IMR-90 (cell line): ENCODE measurements at regions of chr11 and their contacts with region 1.

Region 1: GRCh38 chr11:10307442-10308207 is 2.8 kb downstream of the ADM start:
- DNase-seq: peak; percentile 94
- ATAC-seq: peak; percentile 8
- H3K4me3 ChIP-seq: peak overlapping the region; percentile 65
- H3K27ac ChIP-seq: peak overlapping the region; percentile 83
- H3K4me1 ChIP-seq: peaks cover 7% of the 10 kb centered on the region
- H3K27me3 ChIP-seq: no peaks in the 10 kb centered on the region
- CTCF ChIP-seq: peak; percentile 95
- POLR2A ChIP-seq: peak; percentile 51; the same call in 1 of the 2 replicates
- RAD21 ChIP-seq: peak; percentile 87

Region 2: DNA sequence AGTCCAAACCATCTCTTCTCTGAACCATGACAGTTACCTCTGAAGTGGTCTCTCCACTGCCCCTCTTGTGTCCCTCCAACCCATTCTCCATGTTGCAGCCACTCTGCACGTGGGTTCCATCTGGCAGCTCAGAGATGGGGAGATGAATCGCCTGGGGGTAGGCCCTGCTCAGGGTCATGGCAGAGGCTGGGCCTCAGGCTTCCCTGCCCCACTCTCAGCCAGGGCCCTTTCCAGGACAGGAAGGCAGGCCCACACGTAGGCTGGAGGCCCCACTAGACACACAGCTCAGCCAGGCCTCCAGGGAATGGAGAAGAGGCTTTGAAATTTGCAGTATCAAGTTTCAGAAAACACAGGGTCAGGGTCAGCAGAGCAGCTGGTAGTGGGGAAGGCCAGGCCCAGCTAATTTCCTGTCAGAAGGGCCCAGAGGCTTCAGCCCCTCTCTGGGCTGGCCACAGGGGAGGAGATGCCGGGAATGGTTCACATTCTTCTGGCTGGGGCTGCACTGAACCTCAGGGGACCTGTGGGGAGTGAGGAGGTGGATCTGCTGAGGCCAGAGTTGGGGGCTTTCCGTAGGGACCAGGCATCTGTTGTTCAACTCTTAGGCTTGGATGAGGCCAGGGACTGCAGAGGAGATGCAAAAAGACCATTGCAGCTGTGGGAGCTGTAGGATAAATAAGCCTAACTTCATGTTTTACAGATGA is 542.2 kb before region 1 on chr11:
- CTCF ChIA-PET with region 1: no interaction called
- POLR2A ChIA-PET with region 1: interaction called, 18 read pairs
- dilution Hi-C with region 1: no loop called
- in situ Hi-C with region 1: no loop called
- intact Hi-C with region 1: no loop called
- DNase-seq: peak; percentile 95
- ATAC-seq: peak; percentile 90
- H3K4me3 ChIP-seq: no peak overlapping the region
- H3K27ac ChIP-seq: peak overlapping the region; percentile 98
- H3K4me1 ChIP-seq: peaks cover 35% of the 10 kb centered on the region
- H3K27me3 ChIP-seq: no peaks in the 10 kb centered on the region
- CTCF ChIP-seq: no peak
- POLR2A ChIP-seq: no peak
- RAD21 ChIP-seq: no peak

Region 3: GRCh38 chr11:9895006-9895405 is 412.6 kb before region 1 on chr11:
- CTCF ChIA-PET with region 1: no interaction called
- POLR2A ChIA-PET with region 1: interaction called, 13 read pairs
- dilution Hi-C with region 1: no loop called
- in situ Hi-C with region 1: no loop called
- intact Hi-C with region 1: no loop called
- DNase-seq: peak; percentile 51
- ATAC-seq: peak; percentile 52; the same call in 1 of the 2 replicates
- H3K4me3 ChIP-seq: no peak overlapping the region
- H3K27ac ChIP-seq: no peak overlapping the region
- H3K4me1 ChIP-seq: peaks cover 4% of the 10 kb centered on the region
- H3K27me3 ChIP-seq: no peaks in the 10 kb centered on the region
- CTCF ChIP-seq: no peak
- POLR2A ChIP-seq: no peak
- RAD21 ChIP-seq: no peak

Region 4: DNA sequence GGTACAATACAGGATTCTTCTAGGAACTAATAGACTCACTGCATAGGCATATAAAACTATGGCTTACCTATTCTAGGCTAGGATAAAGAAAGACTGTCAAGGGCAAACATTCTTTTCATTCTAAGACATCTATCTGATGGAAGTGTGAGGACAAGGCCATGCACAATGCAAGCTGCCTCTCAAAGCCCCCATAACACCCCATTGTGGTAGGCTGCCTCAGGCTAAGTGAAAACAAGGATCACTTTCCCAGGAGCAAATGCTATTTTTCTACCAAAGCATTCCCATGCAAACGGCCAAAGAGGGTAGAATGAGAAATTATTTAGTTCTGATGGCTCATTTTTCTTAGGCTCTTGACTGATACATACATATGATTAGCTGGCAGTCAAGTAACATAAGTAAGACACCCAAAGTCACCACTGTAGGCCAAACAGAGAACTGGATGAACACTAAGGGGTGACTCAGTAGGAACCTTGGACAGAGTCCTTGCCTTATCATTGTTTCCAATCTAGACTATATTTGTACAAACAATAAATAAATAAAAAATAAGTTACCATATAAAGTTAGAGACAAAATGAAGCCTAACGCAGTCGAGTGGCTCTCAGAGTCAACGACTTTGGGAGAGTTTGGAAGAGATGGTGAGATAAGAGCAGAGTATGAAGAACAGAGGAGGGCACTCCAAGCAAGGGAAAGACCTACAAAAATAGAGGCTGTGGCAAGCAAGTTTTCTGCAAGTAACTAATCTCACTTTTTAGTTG is 317.2 kb before region 1 on chr11:
- CTCF ChIA-PET with region 1: no interaction called
- POLR2A ChIA-PET with region 1: interaction called, 5 read pairs
- dilution Hi-C with region 1: no loop called
- in situ Hi-C with region 1: no loop called
- intact Hi-C with region 1: loop called (anchors 2 kb)
- DNase-seq: peak; percentile 37
- ATAC-seq: peak; percentile 53
- H3K4me3 ChIP-seq: no peak overlapping the region
- H3K27ac ChIP-seq: no peak overlapping the region
- H3K4me1 ChIP-seq: peaks cover 2% of the 10 kb centered on the region
- H3K27me3 ChIP-seq: no peaks in the 10 kb centered on the region
- CTCF ChIP-seq: peak; percentile 41
- POLR2A ChIP-seq: no peak
- RAD21 ChIP-seq: peak; percentile 53

Region 5: GRCh38 chr11:10366568-10367370 is 59.1 kb after region 1 on chr11:
- CTCF ChIA-PET with region 1: interaction called, 12 read pairs
- POLR2A ChIA-PET with region 1: interaction called, 28 read pairs
- dilution Hi-C with region 1: no loop called
- in situ Hi-C with region 1: no loop called
- intact Hi-C with region 1: loop called (anchors 1 kb)
- DNase-seq: peak; percentile 98
- ATAC-seq: peak; percentile 96
- H3K4me3 ChIP-seq: no peak overlapping the region
- H3K27ac ChIP-seq: peak overlapping the region; percentile 32; the same call in 1 of the 2 replicates
- H3K4me1 ChIP-seq: peaks cover 4% of the 10 kb centered on the region
- H3K27me3 ChIP-seq: no peaks in the 10 kb centered on the region
- CTCF ChIP-seq: peak; percentile 94
- POLR2A ChIP-seq: no peak
- RAD21 ChIP-seq: peak; percentile 94

Region 6: DNA sequence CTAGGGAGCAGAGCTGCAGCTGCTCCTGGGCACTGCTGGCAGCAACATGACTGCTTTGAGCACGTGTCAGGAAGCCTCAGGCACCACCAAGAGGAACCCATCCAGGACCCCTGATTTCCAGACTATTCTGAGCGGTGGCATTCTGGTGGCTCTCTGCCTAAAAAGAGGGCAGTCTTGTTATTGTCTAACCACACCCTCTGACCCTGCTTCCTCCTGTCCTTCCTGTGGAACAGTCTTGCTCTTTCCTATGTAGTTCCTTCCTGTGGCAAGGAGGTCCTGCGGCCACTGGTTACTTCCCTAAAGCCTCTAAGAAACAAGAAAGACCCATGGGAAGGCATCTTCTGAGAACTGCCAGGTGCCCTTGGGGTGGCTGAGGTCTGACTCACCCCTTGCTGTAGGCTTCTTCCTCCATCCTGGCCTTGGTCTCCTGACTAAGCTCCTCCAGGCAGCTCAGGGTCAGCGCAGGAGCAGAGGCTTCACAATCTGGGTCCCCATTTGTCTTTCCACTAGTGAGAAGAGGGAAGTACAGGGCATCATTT is 273.9 kb after region 1 on chr11:
- CTCF ChIA-PET with region 1: no interaction called
- POLR2A ChIA-PET with region 1: no interaction called
- dilution Hi-C with region 1: no loop called
- in situ Hi-C with region 1: no loop called
- intact Hi-C with region 1: no loop called
- DNase-seq: peak; percentile 63
- ATAC-seq: peak; percentile 30; the same call in 1 of the 2 replicates
- H3K4me3 ChIP-seq: no peak overlapping the region
- H3K27ac ChIP-seq: no peak overlapping the region
- H3K4me1 ChIP-seq: peaks cover 22% of the 10 kb centered on the region
- H3K27me3 ChIP-seq: no peaks in the 10 kb centered on the region
- CTCF ChIP-seq: no peak
- POLR2A ChIP-seq: no peak
- RAD21 ChIP-seq: no peak